CD4-positive, alpha-beta memory T cell (primary cell): ENCODE measurements at regions of chrX and their contacts with region 1.

Region 1: GRCh38 chrX:152941328-152942106 is 43.6 kb downstream of the ZNF185 start:
- DNase-seq: peak; percentile 89 to 92 (median 90)
- H3K4me3 ChIP-seq: peak overlapping the region in 1 of 2 donors; percentile 68
- H3K4me3 Mint-ChIP-seq: peak overlapping the region; percentile 79 to 91 (median 85)
- H3K27ac ChIP-seq: peak overlapping the region; percentile 53
- H3K27ac Mint-ChIP-seq: peak overlapping the region; percentile 85 to 91 (median 89)
- H3K4me1 ChIP-seq: peaks cover 5% of the 10 kb centered on the region
- H3K4me1 Mint-ChIP-seq: peaks cover 4 to 13% (median 7%) of the 10 kb centered on the region in 4 donors
- H3K27me3 ChIP-seq: no peaks in the 10 kb centered on the region
- H3K27me3 Mint-ChIP-seq: no peaks in the 10 kb centered on the region

Region 2: GRCh38 chrX:152830312-152831305 is 110.9 kb before region 1 on chrX and contains the starts of genes CETN2 and NSDHL:
- CTCF ChIA-PET with region 1: no interaction called
- POLR2A ChIA-PET with region 1: no interaction called
- intact Hi-C with region 1: loop called (anchors 2 kb)
- DNase-seq: peak; percentile 94 to 95 (median 94)
- H3K4me3 ChIP-seq: peak within 1 kb of the TSS; percentile 69 to 70
- H3K4me3 Mint-ChIP-seq: peak within 1 kb of the TSS; percentile 89 to 97 (median 94)
- H3K27ac ChIP-seq: peak within 1 kb of the TSS; percentile 77
- H3K27ac Mint-ChIP-seq: peak within 1 kb of the TSS; percentile 83 to 98 (median 96)
- H3K4me1 ChIP-seq: peaks cover 20% of the 10 kb centered on the region
- H3K4me1 Mint-ChIP-seq: peaks cover 12 to 31% (median 22%) of the 10 kb centered on the region in 4 donors
- H3K27me3 ChIP-seq: no peaks in the 10 kb centered on the region
- H3K27me3 Mint-ChIP-seq: no peaks in the 10 kb centered on the region
- total RNA-seq, gene CETN2: 5.6 to 6.5 TPM
- total RNA-seq, gene NSDHL: 6.5 to 7.1 TPM

Region 3: GRCh38 chrX:152915527-152916241 is 25.8 kb before region 1 on chrX:
- CTCF ChIA-PET with region 1: no interaction called
- POLR2A ChIA-PET with region 1: no interaction called
- intact Hi-C with region 1: no loop called
- DNase-seq: no peak
- H3K4me3 ChIP-seq: no peak overlapping the region
- H3K4me3 Mint-ChIP-seq: no peak overlapping the region
- H3K27ac ChIP-seq: no peak overlapping the region
- H3K27ac Mint-ChIP-seq: no peak overlapping the region
- H3K4me1 ChIP-seq: no peaks in the 10 kb centered on the region
- H3K4me1 Mint-ChIP-seq: no peaks in the 10 kb centered on the region
- H3K27me3 ChIP-seq: no peaks in the 10 kb centered on the region
- H3K27me3 Mint-ChIP-seq: no peaks in the 10 kb centered on the region

Region 4: DNA sequence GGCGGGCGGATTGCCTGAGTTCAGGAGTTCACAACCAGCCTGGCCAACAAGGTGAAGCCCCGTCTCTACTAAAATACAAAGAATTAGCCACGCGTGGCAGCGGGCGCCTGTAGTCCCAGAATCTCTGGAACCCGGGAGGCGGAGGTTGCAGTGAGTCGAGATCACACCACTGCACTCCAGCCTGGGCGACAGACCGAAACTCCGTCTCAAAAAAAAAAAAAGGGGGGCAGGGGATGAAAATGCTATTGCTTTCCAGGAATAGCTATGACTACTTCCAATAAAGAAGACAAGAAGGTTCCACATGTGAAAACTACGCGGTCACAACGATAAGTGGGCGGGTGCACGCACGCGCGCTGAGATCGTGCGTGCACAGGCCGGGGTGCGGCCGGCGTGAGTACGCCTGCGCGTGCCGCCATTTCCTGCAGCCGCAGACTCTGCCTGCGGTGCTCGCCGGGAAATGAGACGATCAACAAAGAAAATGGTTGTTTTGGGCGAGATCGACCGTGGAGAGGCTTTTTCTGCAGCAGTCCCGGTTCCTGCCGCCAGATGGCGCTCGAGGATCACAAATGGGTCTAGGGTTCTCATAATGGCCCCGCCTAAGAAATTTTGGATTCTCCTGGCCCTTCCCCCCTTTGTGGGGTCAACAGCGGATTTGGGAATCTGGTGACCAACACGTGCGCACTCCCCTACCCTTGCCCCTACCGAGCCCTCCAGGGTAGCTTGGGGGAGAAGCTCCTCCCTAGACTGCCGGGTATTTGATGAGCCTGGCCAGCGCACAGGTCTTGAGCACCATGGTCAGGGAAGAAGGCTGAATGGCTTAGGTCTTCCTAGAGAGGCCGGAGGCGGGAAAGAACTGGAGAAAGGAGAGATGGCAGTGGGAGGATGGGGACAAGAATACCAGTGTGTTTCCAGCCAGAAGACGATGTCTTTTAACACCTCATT is 17.3 kb after region 1 on chrX:
- CTCF ChIA-PET with region 1: interaction called, 40 read pairs
- POLR2A ChIA-PET with region 1: interaction called, 20 read pairs
- intact Hi-C with region 1: loop called (anchors 1 kb)
- DNase-seq: peak; percentile 90 to 93 (median 93)
- H3K4me3 ChIP-seq: peak overlapping the region in 1 of 2 donors; percentile 28
- H3K4me3 Mint-ChIP-seq: peak overlapping the region; percentile 39 to 86 (median 77)
- H3K27ac ChIP-seq: peak overlapping the region; percentile 31
- H3K27ac Mint-ChIP-seq: peak overlapping the region; percentile 84 to 96 (median 94)
- H3K4me1 ChIP-seq: peaks cover 7% of the 10 kb centered on the region
- H3K4me1 Mint-ChIP-seq: peaks cover 3 to 16% (median 7%) of the 10 kb centered on the region in 4 donors
- H3K27me3 ChIP-seq: no peaks in the 10 kb centered on the region
- H3K27me3 Mint-ChIP-seq: no peaks in the 10 kb centered on the region

Region 5: GRCh38 chrX:153019166-153019565 is 77.6 kb after region 1 on chrX:
- CTCF ChIA-PET with region 1: no interaction called
- POLR2A ChIA-PET with region 1: no interaction called
- intact Hi-C with region 1: no loop called
- DNase-seq: peak in 3 of 5 donors; percentile 6 to 10 (median 9)
- H3K4me3 ChIP-seq: no peak overlapping the region
- H3K4me3 Mint-ChIP-seq: peak overlapping the region in 6 of 8 donors; percentile 6 to 51 (median 45)
- H3K27ac ChIP-seq: no peak overlapping the region
- H3K27ac Mint-ChIP-seq: peak overlapping the region in 6 of 7 donors; percentile 39 to 84 (median 72)
- H3K4me1 ChIP-seq: peaks cover 14% of the 10 kb centered on the region
- H3K4me1 Mint-ChIP-seq: peaks cover 12 to 17% (median 15%) of the 10 kb centered on the region in 4 donors
- H3K27me3 ChIP-seq: no peaks in the 10 kb centered on the region
- H3K27me3 Mint-ChIP-seq: peaks cover 0 to 3% of the 10 kb centered on the region in 2 donors

Region 6: DNA sequence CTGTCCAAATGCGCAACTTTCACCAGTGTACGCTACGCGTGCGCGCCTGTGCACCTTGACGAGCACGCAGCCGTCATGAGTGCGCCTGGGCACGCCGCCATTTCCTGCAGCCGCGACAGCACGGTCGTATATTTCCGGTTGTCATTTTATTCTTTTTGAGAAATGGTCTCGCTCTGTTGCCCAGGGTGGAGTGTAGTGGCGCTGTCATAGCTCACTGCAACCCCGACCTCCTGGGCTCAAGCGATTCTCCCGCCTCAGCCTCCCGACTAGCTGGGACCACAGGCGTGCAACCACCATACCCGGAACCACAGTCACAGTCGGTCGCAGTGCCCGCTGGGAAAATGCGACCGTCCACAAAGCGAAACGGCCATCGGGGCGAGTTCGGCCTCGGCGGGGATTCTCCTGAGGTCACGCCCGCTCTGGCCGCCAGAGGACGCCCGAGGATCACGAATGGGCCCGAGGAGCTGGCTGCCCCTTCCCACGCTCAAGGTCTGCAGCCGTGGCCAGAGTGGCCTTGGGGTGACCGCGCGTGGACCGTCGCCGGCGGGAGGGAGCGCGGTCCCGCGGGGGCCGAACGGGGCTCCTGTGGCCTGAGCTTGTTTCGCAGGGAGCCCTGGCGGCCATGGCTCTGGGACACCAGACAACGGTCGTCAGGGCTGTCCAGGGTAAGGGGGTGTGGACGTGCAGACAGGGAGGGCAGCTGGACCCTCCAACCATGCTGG is 91.0 kb after region 1 on chrX:
- CTCF ChIA-PET with region 1: interaction called, 14 read pairs
- POLR2A ChIA-PET with region 1: interaction called, 12 read pairs
- intact Hi-C with region 1: loop called (anchors 5 kb)
- DNase-seq: peak; percentile 38 to 62 (median 57)
- H3K4me3 ChIP-seq: peak overlapping the region in 1 of 2 donors; percentile 36
- H3K4me3 Mint-ChIP-seq: peak overlapping the region; percentile 83 to 91 (median 86)
- H3K27ac ChIP-seq: peak overlapping the region; percentile 52
- H3K27ac Mint-ChIP-seq: peak overlapping the region; percentile 79 to 94 (median 90)
- H3K4me1 ChIP-seq: peaks cover 9% of the 10 kb centered on the region
- H3K4me1 Mint-ChIP-seq: peaks cover 0 to 24% (median 8%) of the 10 kb centered on the region in 4 donors
- H3K27me3 ChIP-seq: no peaks in the 10 kb centered on the region
- H3K27me3 Mint-ChIP-seq: no peaks in the 10 kb centered on the region

Region 7: GRCh38 chrX:153470435-153471363 is 529.2 kb after region 1 on chrX and contains the start of gene HAUS7:
- CTCF ChIA-PET with region 1: interaction called, 13 read pairs
- POLR2A ChIA-PET with region 1: interaction called, 9 read pairs
- intact Hi-C with region 1: loop called (anchors 1 kb)
- DNase-seq: peak; percentile 84 to 89 (median 87)
- H3K4me3 ChIP-seq: peak within 1 kb of the TSS; percentile 42 to 69
- H3K4me3 Mint-ChIP-seq: peak within 1 kb of the TSS; percentile 80 to 87 (median 83)
- H3K27ac ChIP-seq: peak within 1 kb of the TSS; percentile 59
- H3K27ac Mint-ChIP-seq: peak within 1 kb of the TSS; percentile 59 to 89 (median 82)
- H3K4me1 ChIP-seq: peaks cover 31% of the 10 kb centered on the region
- H3K4me1 Mint-ChIP-seq: peaks cover 6 to 21% (median 15%) of the 10 kb centered on the region in 4 donors
- H3K27me3 ChIP-seq: no peaks in the 10 kb centered on the region
- H3K27me3 Mint-ChIP-seq: no peaks in the 10 kb centered on the region
- total RNA-seq, gene HAUS7: 29.8 to 33.8 TPM